HCT116 (cell line): ENCODE measurements at regions of chr22 and their contacts with region 1.

Region 1: DNA sequence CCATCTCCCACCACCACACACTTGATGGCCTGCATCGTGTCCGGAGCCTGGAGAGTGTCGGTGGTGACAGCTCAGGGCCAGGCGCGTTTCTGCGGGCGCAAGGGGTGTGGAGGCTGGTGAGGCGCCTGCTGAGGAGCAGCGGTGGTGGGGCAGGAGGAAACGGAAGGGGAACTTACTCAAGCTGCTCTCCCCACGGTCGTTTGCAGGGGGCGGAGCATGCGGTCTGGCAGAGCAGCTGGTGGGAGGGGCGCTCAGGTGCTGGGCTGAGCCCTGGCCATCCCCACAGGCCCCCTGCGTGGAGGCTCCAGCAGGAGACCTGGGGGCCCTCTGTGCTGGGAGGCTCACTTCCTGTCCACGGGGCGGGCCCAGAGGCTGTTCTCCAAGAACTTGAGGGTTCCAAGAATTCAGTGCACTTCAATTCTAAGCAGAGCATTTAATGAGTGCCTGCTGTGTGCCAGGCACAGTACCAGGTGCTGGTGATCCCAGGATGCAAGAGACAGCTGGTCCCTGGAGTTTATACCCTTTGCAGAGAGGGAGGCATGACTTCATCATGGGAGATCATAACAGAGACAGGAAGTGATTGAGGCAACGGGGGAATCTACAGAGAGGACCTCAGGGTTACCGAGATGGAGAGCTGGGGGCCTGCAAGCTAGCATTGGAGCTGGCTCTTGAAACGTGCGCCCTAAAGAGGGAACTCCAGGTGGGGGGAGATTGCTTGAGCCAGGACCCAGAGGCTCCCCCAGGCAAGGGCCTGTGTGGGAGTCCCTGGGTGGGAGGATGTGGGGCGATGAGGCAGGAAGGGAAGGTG is at the start of gene RAC2:
- DNase-seq: peak; percentile 51
- ATAC-seq: peak; percentile 92
- H3K4me3 ChIP-seq: peak within 1 kb of the TSS; percentile 71 to 97
- H3K27ac ChIP-seq: peak within 1 kb of the TSS; percentile 54; the same call in 1 of the 2 replicates
- H3K4me1 ChIP-seq: peaks cover 11 to 35% of the 10 kb centered on the region in 2 experiments
- H3K27me3 ChIP-seq: no peaks in the 10 kb centered on the region
- CTCF ChIP-seq: no peak
- POLR2A ChIP-seq: no peak
- RAD21 ChIP-seq: no peak
- total RNA-seq, gene RAC2: 62.0 TPM

Region 2: DNA sequence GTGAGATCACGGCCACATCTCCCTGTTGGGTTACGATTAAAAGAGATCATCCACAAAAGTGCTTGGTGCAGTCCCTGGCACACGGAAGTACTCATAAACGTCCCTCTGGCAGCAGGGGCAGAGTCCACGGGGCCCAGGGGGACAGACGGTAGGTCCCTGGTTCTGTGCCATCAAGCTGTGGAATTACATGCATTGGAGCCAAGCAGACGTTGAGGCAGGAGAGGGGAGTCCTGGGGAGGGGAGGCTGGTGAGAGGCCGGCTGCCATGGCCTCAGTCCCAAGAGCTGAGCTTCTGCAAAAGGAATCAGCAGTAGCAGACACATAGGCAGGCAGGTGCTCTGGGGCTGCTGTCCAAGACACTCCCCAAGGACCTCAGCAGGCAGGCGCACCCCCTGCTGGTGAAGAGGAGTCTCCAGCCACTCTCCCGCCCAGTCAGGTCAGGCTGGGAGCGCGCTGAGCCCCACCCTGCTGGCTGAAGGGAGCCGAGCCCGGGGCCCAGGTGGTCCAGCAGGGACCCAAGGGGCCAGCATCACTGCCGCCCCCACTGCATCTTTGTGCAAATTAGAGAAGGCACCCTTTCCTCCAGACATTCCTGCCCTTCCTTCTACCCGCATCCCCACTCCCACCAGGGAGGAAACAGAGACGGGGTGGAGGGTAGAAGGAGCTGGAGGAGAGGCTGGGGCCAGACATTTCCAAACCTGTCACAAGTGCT is 200.3 kb before region 1 on chr22:
- CTCF ChIA-PET with region 1: no interaction called
- POLR2A ChIA-PET with region 1: no interaction called
- RAD21 ChIA-PET with region 1: no interaction called
- intact Hi-C with region 1: no loop called
- DNase-seq: peak; percentile 47
- ATAC-seq: peak; percentile 100
- H3K4me3 ChIP-seq: no peak overlapping the region
- H3K27ac ChIP-seq: no peak overlapping the region
- H3K4me1 ChIP-seq: peaks cover 6 to 35% of the 10 kb centered on the region in 2 experiments; a peak in 3 of 4 replicates
- H3K27me3 ChIP-seq: no peaks in the 10 kb centered on the region
- CTCF ChIP-seq: peak; percentile 76 to 88 (median 79); a peak in 5 of 6 replicates
- POLR2A ChIP-seq: no peak
- RAD21 ChIP-seq: peak; percentile 82

Region 3: GRCh38 chr22:37229805-37230672 is 14.3 kb before region 1 on chr22:
- CTCF ChIA-PET with region 1: no interaction called
- POLR2A ChIA-PET with region 1: interaction called, 10 read pairs
- RAD21 ChIA-PET with region 1: no interaction called
- intact Hi-C with region 1: no loop called
- DNase-seq: peak; percentile 51
- ATAC-seq: peak; percentile 76
- H3K4me3 ChIP-seq: peak overlapping the region in 1 of 2 experiments; percentile 48; a peak in 2 of 4 replicates
- H3K27ac ChIP-seq: peak overlapping the region; percentile 55
- H3K4me1 ChIP-seq: peaks cover 24 to 41% of the 10 kb centered on the region in 2 experiments
- H3K27me3 ChIP-seq: no peaks in the 10 kb centered on the region
- CTCF ChIP-seq: no peak
- POLR2A ChIP-seq: no peak
- RAD21 ChIP-seq: no peak